Dorsolateral prefrontal cortex (tissue), 120 donors: ENCODE measurements at regions of chr5 and their contacts with region 1.

Region 1: DNA sequence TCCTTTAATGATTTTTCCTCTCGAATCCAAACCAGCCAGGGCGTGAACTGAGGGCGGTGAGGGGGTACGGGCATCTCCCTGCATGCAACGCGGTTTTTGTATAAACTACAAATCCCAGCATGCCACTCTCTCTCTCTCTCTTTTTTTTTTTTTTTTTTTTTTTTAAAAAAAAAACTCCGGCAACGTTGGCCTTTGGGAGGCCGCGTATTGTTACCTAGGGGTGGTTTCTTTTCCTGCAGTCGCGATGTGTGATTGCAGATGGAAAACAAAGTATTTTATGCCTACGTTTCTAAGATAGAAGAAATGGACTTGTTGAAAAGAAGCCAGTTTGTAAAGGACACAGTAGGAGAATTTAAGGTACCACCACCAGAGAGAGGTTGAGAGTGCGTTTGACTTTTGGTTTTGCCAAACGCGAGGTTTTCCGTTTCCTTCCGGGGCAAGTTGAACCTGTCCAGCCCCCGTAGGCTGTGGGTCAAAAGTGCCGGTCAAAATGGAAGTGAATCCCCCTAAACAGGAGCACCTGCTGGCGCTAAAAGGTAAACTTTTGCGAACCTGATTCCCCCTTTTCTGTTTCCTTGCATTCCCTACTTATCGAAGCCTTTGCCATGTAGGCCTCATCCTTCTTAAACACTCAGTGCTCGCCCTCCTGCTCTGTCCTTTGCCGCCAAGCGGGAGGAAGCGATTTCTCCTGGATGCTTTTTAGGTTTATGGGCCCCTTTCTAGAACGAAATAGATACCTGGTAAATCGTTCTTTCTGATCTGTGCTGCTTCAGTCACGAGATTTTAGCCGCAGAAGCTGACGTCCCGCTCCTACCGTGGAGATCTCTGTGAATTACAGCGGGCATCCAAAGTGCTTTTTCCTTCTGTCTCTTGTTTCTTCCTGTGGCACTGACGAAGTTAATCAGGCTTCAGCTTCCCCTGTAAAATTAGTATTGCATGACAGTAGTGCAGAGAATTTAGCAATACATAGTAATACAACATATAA is at the starts of genes SHLD3 and TRAPPC13:
- DNase-seq: peak; percentile 73 to 88 (median 84)
- H3K4me3 ChIP-seq: peak within 1 kb of the TSS; percentile 71 to 100 (median 98)
- H3K27ac ChIP-seq: peak within 1 kb of the TSS; percentile 73 to 99 (median 93)
- H3K27me3 ChIP-seq: no peaks in the 10 kb centered on the region
- CTCF ChIP-seq: peak in 15 of 56 donors; percentile 2 to 43 (median 18)
- total RNA-seq, gene SHLD3: 1.4 to 7.4 (median 3.9) TPM
- total RNA-seq, gene TRAPPC13: 17.4 to 49.3 (median 32.9) TPM

Region 2: DNA sequence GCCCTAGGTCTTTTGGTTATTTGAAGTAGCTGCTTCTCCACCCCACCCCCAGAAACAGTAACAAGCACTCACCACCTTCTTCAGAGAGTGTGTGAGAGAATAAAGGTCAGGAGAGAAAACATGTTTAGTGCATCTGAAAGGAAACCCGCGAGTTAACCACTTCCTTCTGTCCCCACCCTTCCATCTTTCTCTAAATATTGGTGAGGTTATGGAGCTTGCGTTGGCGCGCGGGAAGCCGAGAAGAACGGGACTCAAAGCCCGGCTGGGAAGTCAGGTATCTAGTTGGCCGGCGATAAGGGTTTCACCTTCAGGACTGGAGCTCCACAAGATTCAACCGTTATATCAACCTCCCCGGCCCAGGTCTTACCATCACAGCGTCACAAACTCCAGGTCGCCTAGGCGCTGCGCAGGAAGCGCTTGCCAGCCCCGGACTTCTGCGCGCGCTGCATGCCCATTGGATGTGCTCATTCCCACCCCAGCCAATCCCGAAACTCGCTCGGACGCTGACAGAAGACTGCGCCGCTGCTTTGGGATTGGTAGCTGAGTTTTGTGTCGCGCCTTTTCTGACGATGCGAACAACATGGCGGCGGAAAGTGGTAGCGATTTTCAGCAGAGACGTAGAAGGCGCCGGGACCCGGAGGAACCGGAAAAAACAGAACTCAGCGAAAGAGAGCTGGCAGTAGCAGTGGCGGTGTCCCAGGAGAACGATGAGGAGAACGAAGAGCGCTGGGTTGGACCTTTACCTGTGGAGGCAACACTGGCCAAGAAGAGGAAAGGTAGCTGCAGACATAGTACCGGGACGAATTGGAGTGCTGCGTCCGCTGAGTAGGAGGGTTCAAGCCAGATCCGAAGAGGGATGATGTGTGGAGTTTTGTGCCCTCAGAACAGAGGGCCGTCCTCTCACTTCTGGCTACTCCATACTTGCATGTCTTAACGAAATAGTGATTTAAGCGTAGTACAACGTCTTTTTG is 61.8 kb before region 1 on chr5 and contains the starts of genes CENPK and PPWD1:
- intact Hi-C with region 1: loop called (anchors 1 to 5 kb)
- DNase-seq: peak; percentile 88 to 96 (median 94)
- H3K4me3 ChIP-seq: peak within 1 kb of the TSS; percentile 62 to 100 (median 89)
- H3K27ac ChIP-seq: peak within 1 kb of the TSS in 58 of 59 donors; percentile 26 to 95 (median 84)
- H3K27me3 ChIP-seq: no peaks in the 10 kb centered on the region
- CTCF ChIP-seq: peak in 25 of 56 donors; percentile 7 to 46 (median 20)
- total RNA-seq, gene CENPK: 0.35 to 4.6 (median 1.6) TPM in 107 of 120 experiments, not detected in the others
- total RNA-seq, gene PPWD1: 28.2 to 67.8 (median 45.2) TPM

Region 3: GRCh38 chr5:65721720-65722574 is 97.1 kb after region 1 on chr5 and contains the starts of genes NLN and SGTB:
- intact Hi-C with region 1: loop called (anchors 2 to 5 kb)
- DNase-seq: peak; percentile 73 to 94 (median 88)
- H3K4me3 ChIP-seq: peak within 1 kb of the TSS; percentile 63 to 100 (median 95)
- H3K27ac ChIP-seq: peak within 1 kb of the TSS; percentile 27 to 93 (median 79)
- H3K27me3 ChIP-seq: no peaks in the 10 kb centered on the region
- CTCF ChIP-seq: peak in 7 of 56 donors; percentile 9 to 23 (median 16)
- total RNA-seq, gene NLN: 14.0 to 41.7 (median 30.4) TPM
- total RNA-seq, gene SGTB: 31.9 to 123 (median 81.4) TPM